CD8-positive, alpha-beta T cell (primary cell): ENCODE measurements at regions of chr17 and their contacts with region 1.

Region 1: DNA sequence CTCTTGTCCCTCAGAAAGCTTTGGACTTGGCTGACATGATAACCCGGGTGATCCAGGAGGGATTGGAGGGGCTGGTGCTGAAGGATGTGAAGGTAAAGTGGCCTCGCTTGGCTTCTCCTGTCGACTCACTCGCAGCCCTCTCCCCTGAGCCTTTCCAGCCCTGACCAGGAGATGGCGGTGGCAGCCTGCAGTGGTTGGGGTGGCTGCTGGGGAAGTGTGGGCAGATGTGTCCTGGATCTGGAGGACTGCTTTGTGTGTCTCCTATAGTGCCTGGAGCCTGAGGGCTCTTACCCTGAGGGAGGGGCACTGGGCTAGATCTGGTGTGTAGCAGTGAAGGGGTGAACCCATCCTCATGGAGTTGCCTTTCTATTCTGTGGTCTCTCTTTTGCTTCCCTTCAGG is 17.9 kb downstream of the LIG3 start:
- DNase-seq: peak; percentile 57 to 87 (median 77)
- ATAC-seq: peak; percentile 97
- H3K4me3 ChIP-seq: no peak overlapping the region
- H3K4me3 Mint-ChIP-seq: no peak overlapping the region
- H3K27ac ChIP-seq: no peak overlapping the region
- H3K27ac Mint-ChIP-seq: peak overlapping the region; percentile 76
- H3K4me1 ChIP-seq: no peaks in the 10 kb centered on the region
- H3K4me1 Mint-ChIP-seq: peaks cover 5% of the 10 kb centered on the region
- H3K27me3 ChIP-seq: no peaks in the 10 kb centered on the region
- H3K27me3 Mint-ChIP-seq: no peaks in the 10 kb centered on the region
- CTCF ChIP-seq: peak; percentile 70

Region 2: GRCh38 chr17:34420254-34420766 is 577.9 kb before region 1 on chr17:
- CTCF ChIA-PET with region 1: interaction called, 3 read pairs
- POLR2A ChIA-PET with region 1: no interaction called
- intact Hi-C with region 1: loop called in 1 of 2 experiments (anchors 5 kb)
- DNase-seq: peak; percentile 26 to 79 (median 67)
- ATAC-seq: peak; percentile 64
- H3K4me3 ChIP-seq: no peak overlapping the region
- H3K4me3 Mint-ChIP-seq: no peak overlapping the region
- H3K27ac ChIP-seq: no peak overlapping the region
- H3K27ac Mint-ChIP-seq: no peak overlapping the region
- H3K4me1 ChIP-seq: no peaks in the 10 kb centered on the region
- H3K4me1 Mint-ChIP-seq: no peaks in the 10 kb centered on the region
- H3K27me3 ChIP-seq: peaks cover 0 to 4% of the 10 kb centered on the region in 2 experiments
- H3K27me3 Mint-ChIP-seq: peaks cover 40% of the 10 kb centered on the region
- CTCF ChIP-seq: peak; percentile 96

Region 3: DNA sequence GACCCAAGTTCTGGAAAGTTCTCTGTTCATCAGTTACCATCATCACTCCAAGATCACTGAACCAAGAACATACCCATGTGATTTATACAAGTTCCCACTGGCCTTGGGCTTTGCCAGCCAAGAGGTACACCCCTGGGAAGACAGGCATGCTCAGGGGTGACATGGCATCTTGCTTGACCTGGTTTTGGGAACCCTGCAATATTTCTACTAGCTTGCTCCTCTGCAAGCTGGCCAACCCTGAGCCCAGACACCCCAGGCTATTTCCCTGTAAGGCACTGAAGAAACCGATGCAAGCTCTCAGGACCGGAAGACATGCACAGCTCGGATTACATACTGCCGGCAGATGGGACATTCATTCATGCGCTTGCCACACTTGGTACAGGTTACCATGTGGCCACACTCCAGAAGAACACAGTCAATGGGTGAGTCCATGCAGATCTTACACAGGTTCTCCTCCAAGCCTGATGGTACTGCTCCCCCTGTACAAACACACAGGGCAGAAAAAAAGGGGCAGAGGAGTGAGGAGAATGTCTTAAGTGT is 13.5 kb after region 1 on chr17:
- CTCF ChIA-PET with region 1: interaction called, 18 read pairs
- POLR2A ChIA-PET with region 1: interaction called, 4 read pairs
- intact Hi-C with region 1: no loop called
- DNase-seq: no peak
- ATAC-seq: no peak
- H3K4me3 ChIP-seq: no peak overlapping the region
- H3K4me3 Mint-ChIP-seq: no peak overlapping the region
- H3K27ac ChIP-seq: no peak overlapping the region
- H3K27ac Mint-ChIP-seq: no peak overlapping the region
- H3K4me1 ChIP-seq: no peaks in the 10 kb centered on the region
- H3K4me1 Mint-ChIP-seq: no peaks in the 10 kb centered on the region
- H3K27me3 ChIP-seq: no peaks in the 10 kb centered on the region
- H3K27me3 Mint-ChIP-seq: no peaks in the 10 kb centered on the region
- CTCF ChIP-seq: no peak

Region 4: DNA sequence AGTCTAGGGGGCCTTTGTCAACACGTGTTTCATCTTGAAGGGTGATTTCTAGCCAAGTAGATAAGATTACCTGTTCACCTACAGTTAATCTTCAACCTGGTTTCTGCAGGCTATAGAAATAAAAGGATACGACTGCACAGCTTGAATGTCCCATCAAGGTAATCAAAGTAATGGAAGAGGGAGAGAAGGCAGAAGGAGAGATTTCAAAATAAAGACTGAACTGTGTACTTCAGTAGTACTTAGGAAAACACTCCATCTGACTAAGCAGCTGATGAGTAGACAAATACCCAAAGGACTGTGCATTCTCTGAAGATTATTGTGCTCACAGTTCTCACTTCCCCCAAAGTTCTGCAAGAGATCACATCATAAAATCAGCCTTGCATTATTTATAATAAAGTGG is 71.1 kb after region 1 on chr17:
- CTCF ChIA-PET with region 1: interaction called, 73 read pairs
- POLR2A ChIA-PET with region 1: no interaction called
- intact Hi-C with region 1: no loop called
- DNase-seq: no peak
- ATAC-seq: no peak
- H3K4me3 ChIP-seq: no peak overlapping the region
- H3K4me3 Mint-ChIP-seq: no peak overlapping the region
- H3K27ac ChIP-seq: no peak overlapping the region
- H3K27ac Mint-ChIP-seq: no peak overlapping the region
- H3K4me1 ChIP-seq: peaks cover 38% of the 10 kb centered on the region
- H3K4me1 Mint-ChIP-seq: peaks cover 61% of the 10 kb centered on the region
- H3K27me3 ChIP-seq: no peaks in the 10 kb centered on the region
- H3K27me3 Mint-ChIP-seq: no peaks in the 10 kb centered on the region
- CTCF ChIP-seq: no peak